Activated CD4-positive, alpha-beta T cell treated with anti-CD3 and anti-CD28 coated beads, Interleukin-2, amount 10 ng/mL, durations not matched to agents 7 days and 5 days (primary cell): ENCODE measurements at regions of chr2 and their contacts with region 1.

Region 1: DNA sequence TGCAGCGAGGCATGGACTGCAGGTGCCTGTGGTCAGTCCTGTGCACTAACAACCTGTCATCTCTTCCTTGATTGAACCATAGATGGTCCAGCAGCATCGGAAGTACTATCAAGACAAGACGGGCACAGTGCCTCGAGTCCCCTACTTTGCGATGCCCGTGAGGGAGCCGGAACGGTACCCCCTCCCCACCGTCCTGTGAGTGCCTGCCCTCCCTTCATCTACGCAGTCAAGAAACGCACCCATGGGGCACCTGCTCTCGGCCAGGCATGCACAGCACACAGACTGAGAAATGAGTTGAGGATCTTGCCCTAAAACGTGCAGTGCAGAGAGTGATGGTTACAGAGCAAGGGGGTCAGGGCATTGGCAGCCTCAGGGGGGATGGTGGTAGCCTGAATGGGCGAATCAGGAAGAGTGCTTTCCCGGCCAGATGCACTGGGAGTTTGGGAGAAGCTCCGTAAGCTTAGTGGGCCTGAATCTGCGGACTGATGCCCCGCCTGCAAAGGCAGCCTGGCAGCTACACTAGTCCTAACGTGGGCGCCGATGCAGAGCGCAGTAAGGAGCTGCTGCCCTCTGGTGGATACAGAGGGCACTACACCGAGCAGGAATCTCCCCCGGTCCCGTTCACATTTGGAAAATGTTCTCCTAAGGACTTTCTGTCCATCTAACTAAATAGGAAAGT is 63.6 kb downstream of the CIB4 start:
- DNase-seq: peak; percentile 70
- H3K4me3 Mint-ChIP-seq: no peak overlapping the region
- H3K27ac Mint-ChIP-seq: no peak overlapping the region
- H3K4me1 Mint-ChIP-seq: peaks cover 2% of the 10 kb centered on the region
- H3K27me3 Mint-ChIP-seq: peaks cover 11% of the 10 kb centered on the region

Region 2: DNA sequence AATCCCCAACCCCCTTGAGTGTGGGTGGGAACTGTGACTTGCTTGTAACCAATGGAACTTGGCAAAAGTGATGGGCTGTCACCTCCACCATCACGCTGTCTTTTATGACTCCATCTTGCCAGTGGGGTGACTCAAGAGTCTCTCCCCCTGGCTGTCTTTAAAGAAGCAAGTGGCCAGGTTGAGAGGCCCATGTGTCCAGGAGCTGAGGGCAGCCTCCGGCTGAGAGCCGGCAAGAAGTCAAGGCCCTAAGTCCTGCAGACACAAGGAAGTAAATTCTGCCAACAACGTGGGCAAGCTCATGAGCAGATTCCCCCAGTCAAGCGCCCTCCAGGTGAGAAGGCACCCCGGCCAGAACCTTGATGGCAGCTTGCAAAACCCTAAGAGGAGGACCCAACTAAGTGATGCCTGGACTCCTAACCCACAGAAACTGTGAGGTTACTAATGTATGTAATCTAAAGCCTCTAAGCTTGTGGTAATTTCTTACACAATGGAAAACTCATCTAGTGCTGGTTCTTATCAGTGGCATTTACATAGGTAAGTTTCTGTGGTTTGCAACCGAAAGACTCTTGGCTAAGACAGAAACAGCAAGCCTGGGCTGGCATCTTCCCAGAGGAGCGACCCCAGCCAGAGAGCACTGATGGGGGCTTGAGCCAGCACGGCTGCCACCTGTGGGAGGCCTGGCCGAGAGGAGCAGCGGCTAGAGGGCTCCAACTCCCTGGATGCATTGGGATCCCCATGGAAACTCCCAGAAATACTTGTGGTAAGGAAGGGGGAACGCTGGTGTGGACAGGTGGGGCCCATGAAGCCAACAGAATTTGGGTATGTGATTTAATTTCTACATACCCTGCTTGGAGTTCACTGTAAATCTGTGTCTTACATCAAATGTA is 14.3 kb after region 1 on chr2:
- CTCF ChIA-PET with region 1: interaction called, 14 read pairs
- POLR2A ChIA-PET with region 1: no interaction called
- DNase-seq: no peak
- H3K4me3 Mint-ChIP-seq: no peak overlapping the region
- H3K27ac Mint-ChIP-seq: no peak overlapping the region
- H3K4me1 Mint-ChIP-seq: peaks cover 6% of the 10 kb centered on the region
- H3K27me3 Mint-ChIP-seq: peaks cover 30% of the 10 kb centered on the region